Dorsolateral prefrontal cortex (tissue), 120 donors: ENCODE measurements at regions of chr13 and their contacts with region 1.

Region 1: GRCh38 chr13:26186118-26186870 is 35.8 kb downstream of the RNF6 start:
- DNase-seq: peak; percentile 72 to 90 (median 82)
- H3K4me3 ChIP-seq: peak overlapping the region; percentile 51 to 84 (median 70)
- H3K27ac ChIP-seq: peak overlapping the region; percentile 3 to 91 (median 81)
- H3K27me3 ChIP-seq: no peaks in the 10 kb centered on the region
- CTCF ChIP-seq: peak in 50 of 56 donors; percentile 16 to 62 (median 44)

Region 2: DNA sequence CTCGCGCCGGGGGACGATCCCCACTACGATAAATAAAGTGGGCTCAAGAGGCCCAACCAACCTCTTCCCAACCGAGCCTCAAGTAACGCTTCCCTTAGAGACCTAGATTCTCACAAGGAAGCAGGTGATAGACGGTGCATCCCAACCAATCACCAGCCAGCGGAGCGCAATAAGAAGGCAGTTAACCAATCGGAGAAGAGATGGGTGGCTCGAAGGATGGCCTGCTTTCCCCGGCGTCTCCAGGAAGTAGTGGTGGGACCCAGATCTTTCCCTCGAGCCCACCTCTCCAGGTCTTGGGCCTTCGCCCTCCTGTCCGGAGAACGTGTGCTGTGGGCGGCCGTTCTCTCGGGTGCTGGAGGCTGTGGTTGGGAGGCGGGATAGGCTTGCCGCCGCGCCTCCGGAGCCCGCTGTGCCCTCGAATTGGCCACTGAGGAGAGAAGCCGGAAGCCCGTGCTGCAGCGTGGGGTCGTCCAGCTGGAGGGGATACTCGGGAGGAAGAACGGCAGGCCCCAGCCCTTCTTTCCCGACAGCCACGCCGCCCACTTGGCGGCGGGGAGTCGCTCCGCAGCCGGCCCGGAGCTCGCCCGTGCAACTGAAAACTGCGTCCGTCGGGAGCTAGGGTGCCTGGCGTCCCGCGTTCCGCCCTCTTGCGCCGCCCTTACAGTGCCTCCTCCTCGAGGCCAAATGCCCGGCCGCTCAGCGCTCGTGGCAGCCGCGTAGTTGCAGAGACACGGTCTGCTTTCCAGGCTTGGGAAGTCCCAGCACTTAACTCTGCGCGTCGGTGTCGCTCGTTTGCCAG is 35.6 kb after region 1 on chr13 and contains the start of gene RNF6:
- intact Hi-C with region 1: loop called (anchors 1 to 2 kb)
- DNase-seq: peak; percentile 84 to 99 (median 95)
- H3K4me3 ChIP-seq: peak within 1 kb of the TSS; percentile 67 to 99 (median 91)
- H3K27ac ChIP-seq: peak within 1 kb of the TSS; percentile 65 to 99 (median 96)
- H3K27me3 ChIP-seq: no peaks in the 10 kb centered on the region
- CTCF ChIP-seq: peak in 45 of 56 donors; percentile 13 to 63 (median 35)
- total RNA-seq, gene RNF6: 25.4 to 76.6 (median 53.5) TPM

Region 3: DNA sequence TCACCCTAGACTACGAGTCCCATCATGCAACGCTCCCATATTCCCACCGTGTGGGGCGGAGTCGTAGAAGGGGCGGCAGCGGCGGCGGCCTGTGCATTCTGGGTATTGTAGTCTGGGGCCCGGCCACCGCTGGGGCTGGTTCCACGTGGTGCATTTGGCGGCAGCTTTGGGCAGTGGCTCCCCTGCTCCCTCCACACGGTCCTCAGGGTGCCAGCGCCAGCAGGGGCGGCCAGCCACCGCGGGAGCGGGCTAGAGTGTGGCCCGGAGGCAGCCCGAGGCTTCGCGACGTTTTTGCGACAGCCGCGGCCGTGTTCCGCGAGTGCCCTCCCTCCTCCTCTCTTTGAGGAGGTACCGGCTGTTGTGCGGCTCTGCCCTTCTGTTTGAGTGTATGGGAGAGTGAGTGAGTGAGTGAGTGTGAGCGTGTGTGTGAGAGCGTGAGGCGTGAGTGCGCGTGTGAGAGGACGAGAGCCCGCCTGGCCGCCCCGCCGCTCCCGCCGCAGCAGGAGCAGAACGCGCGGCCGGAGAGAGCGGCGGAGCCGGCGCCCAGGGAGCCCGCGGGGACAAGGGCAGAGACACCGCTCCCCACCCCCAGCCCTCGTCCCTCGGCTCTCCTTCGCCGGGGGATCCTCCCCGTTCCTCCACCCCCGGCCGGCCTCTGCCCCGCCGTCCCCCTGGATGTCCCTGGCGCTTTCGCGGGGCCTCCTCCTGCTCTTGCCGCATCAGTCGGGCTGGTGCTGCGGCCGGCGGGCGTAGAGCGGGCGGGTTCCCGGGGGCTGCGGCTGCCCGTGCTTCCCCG is 67.7 kb after region 1 on chr13 and contains the start of gene CDK8:
- intact Hi-C with region 1: loop called (anchors 5 to 10 kb)
- DNase-seq: peak; percentile 89 to 93 (median 91)
- H3K4me3 ChIP-seq: peak within 1 kb of the TSS; percentile 65 to 99 (median 91)
- H3K27ac ChIP-seq: peak within 1 kb of the TSS; percentile 84 to 100 (median 97)
- H3K27me3 ChIP-seq: no peaks in the 10 kb centered on the region
- CTCF ChIP-seq: peak in 28 of 56 donors; percentile 3 to 61 (median 30)
- total RNA-seq, gene CDK8: 10.4 to 23.0 (median 14.9) TPM

Region 4: DNA sequence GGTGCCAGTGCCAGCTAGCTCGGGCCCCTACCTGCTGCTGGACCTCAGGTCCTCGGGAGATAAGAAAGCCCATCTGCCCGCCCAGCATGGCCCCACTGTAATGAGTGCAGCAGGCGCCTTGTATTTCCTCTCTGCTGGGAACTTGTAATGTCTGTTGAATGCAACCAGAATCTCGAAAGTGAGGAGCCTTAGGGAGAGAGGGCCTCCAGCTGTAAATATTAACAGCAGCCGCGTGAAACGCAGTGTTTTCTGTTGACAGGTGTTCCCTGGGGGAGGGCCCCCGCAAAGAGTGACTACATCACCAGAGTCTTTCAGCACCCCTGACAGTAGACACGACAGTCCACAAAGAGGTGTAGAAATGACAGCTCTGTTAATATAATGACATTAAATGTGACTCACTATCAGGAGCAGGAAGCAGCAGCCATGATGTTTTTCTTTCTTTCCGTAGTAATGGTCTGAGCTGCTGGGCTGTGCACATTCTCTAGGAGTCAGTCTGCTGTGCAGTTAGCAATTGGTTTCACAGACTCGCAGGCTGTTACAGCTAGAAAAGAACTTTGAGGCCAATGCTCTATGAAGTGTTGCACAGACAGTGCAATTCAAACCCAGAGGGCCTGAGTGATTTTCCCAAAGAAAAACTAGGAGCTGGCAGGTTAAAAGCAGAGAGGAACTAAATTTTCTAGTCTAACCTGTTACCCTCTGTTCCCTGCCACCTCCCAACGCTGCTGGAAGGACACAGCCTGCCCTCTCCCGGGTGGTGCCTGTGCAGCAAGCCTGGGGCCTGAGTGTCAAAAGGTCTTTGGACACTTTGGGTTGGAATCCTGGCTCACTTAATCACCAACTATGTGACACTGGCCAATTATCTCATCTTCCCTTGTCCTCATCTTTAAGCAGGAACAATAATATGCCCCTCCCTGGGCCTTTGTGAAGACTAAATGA is 312.6 kb after region 1 on chr13:
- intact Hi-C with region 1: loop called (anchors 2 to 5 kb)
- DNase-seq: peak in 1 of 10 donors; percentile 61
- H3K4me3 ChIP-seq: no peak overlapping the region
- H3K27ac ChIP-seq: peak overlapping the region in 1 of 59 donors; percentile 72
- H3K27me3 ChIP-seq: no peaks in the 10 kb centered on the region
- CTCF ChIP-seq: no peak

Region 5: DNA sequence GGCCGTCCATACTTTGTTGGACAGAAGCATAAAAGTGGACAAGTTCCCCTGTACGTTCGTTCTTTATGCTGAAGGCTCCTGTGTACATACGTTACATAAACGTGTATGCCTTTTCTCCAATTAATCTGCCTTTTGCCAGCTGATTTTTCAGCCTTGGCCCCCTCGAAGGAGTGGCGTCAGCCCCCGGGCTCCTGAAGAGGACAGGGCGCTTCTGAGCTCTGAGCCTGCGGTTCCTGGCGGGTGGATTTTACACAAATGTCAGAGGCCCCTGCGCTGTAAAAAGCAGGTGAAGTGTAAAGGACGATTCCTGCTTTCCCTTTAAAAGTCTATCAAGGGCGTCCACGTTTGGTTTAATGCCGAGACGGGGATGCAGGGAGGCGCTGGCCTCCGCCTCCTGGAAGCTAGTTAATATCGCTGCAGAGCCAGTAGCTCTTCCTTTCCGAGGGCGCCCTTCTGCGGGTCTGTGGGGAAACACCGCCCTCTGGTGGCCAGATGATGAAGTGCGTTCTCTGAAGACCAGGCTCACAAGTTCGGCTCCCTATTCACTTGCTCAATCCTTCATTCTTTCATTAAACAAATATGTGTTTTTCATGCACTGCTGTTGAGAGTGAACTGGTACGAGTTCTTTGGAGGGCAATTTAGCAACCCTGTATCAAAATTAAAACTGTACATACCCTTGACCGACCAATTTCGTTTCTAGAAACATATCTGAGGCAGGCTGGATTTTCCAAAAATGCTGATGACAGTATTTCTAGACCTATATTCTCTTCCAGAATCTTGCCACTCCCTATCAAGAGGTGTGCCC is 512.3 kb after region 1 on chr13:
- intact Hi-C with region 1: loop called (anchors 2 to 5 kb)
- DNase-seq: peak; percentile 73 to 92 (median 86)
- H3K4me3 ChIP-seq: peak overlapping the region in 50 of 59 donors; percentile 10 to 59 (median 41)
- H3K27ac ChIP-seq: peak overlapping the region in 8 of 59 donors; percentile 8 to 76 (median 40)
- H3K27me3 ChIP-seq: no peaks in the 10 kb centered on the region
- CTCF ChIP-seq: peak; percentile 96 to 100 (median 99)

Region 6: DNA sequence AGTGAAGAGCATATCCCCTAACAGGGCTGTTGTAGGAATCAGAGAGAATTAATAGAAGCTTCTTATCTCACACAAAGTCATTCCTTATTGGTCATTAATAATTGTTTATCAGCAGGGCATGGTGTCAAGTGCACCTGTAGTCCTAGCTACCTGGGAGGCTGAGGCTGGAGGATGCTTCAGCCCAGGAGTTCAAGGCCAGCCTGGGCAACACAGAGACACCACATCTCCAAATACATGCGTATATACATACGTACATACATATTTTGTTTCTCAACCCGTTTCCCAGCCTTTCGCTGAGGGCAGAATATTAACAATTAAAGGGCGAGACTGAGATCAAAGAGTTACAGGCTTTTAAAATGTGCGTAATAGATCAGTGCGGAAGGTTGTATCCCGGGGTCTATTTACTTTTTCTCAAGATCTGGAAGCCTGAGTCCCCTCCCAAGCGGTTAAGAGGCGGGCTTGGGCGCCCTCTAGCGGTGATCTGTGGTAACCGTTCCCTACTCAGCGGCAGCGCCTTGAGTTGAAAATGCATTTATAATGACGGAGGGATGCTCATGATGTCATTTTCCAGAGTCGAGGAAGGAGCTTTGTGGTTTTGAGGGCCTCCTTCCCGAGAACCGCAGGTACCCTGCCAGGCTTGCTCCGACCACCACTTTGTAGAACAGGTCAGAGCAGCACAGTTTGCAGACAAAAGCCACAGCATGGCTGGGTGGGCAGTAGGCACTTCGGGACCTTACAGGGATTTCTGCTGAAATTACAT is 743.9 kb after region 1 on chr13:
- intact Hi-C with region 1: loop called in 1 of 2 experiments (anchors 10 kb)
- DNase-seq: peak; percentile 67 to 84 (median 78)
- H3K4me3 ChIP-seq: peak overlapping the region in 39 of 59 donors; percentile 4 to 56 (median 36)
- H3K27ac ChIP-seq: peak overlapping the region in 8 of 59 donors; percentile 9 to 65 (median 48)
- H3K27me3 ChIP-seq: peaks cover 0 to 2% (median 0%) of the 10 kb centered on the region in 45 donors
- CTCF ChIP-seq: peak; percentile 71 to 99 (median 97)